Activated CD4-positive, alpha-beta T cell treated with anti-CD3 and anti-CD28 coated beads, Interleukin-2, amount 10 ng/mL, durations not matched to agents 24 days and 14 days (primary cell): ENCODE measurements at regions of chr5 and their contacts with region 1.

Region 1: DNA sequence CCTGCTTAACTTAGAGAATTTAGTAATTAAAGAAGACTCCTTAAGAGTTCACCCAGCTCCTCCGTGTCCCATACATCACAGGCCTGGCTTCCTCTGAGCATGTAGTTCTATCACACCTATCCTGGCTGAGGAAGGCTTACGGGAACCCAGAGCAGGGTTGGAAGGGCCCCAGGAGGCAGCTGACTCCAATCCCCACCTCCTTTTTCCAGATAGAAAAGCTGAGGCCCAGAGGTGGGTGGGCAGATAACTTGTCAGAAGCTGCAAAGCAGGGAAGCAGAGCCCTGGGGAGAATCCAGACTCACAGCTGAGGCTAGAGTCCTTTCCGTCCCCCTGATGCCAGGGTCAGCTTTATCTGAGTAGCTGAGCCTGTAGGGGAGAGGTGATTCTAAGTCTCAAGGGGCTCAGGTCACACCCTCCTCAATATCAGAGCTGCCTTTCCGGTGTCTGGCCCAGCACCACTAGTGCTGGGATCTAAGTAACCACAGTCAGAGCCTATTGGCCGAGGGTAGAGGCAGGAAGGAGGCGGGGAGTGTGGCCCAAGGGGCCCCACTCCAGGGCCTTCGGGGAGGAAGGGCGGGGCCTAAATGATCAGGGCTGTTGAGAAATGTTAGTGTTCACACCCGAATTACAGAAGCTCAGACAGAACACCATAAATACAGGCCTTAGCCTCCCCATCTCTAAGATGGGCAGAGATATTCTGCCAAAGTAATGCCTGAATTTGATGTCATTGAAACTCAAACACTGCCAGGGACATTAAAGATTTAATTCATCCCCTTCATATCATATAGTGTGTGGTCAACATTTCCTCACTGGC is 9.9 kb downstream of the CCDC69 start:
- DNase-seq: peak; percentile 95
- H3K4me3 Mint-ChIP-seq: peak overlapping the region; percentile 91
- H3K27ac Mint-ChIP-seq: peak overlapping the region; percentile 95
- H3K4me1 Mint-ChIP-seq: peaks cover 72% of the 10 kb centered on the region
- H3K27me3 Mint-ChIP-seq: no peaks in the 10 kb centered on the region

Region 2: DNA sequence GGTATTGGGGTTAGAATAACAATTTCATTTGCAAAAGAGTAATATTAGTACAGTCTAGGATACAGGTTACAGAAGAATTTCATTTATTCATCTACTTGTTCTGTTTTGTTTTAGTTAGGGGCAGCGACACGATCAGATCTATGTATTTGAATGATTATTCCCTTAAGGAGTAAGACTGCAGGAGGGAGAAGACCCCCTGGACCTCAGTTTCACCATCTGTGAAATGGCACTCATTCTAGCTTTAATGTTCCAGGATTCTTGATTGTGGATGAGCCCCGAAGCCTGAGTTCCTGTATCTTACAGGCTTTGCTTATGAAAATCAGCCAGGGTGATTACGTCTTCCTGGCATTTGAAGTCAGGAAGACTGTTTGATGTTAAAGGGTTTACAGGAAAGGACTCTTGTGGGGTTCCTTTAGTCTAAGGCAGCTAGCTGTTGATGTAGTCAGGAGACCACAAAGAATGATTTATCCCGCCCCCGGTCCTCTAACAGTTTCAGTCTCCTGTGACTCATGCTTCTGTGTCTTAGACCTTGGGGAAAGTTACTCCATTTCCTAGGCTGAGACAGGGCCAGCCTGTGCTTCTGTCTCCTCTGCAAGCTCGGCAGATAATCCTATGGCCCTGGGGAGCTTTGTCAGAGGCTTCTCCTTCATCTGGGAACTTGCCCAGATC is 423.9 kb before region 1 on chr5:
- intact Hi-C with region 1: loop called (anchors 5 kb)
- DNase-seq: peak; percentile 89
- H3K4me3 Mint-ChIP-seq: peak overlapping the region; percentile 82
- H3K27ac Mint-ChIP-seq: peak overlapping the region; percentile 84
- H3K4me1 Mint-ChIP-seq: peaks cover 55% of the 10 kb centered on the region
- H3K27me3 Mint-ChIP-seq: no peaks in the 10 kb centered on the region

Region 3: GRCh38 chr5:151150471-151151262 is 63.3 kb before region 1 on chr5:
- intact Hi-C with region 1: loop called (anchors 2 kb)
- DNase-seq: peak; percentile 93
- H3K4me3 Mint-ChIP-seq: peak overlapping the region; percentile 66
- H3K27ac Mint-ChIP-seq: peak overlapping the region; percentile 88
- H3K4me1 Mint-ChIP-seq: peaks cover 81% of the 10 kb centered on the region
- H3K27me3 Mint-ChIP-seq: no peaks in the 10 kb centered on the region

Region 4: GRCh38 chr5:151202381-151203139 is 11.4 kb before region 1 on chr5:
- intact Hi-C with region 1: loop called (anchors 1 kb)
- DNase-seq: no peak
- H3K4me3 Mint-ChIP-seq: peak overlapping the region; percentile 50
- H3K27ac Mint-ChIP-seq: peak overlapping the region; percentile 80
- H3K4me1 Mint-ChIP-seq: peaks cover 32% of the 10 kb centered on the region
- H3K27me3 Mint-ChIP-seq: no peaks in the 10 kb centered on the region

Region 5: DNA sequence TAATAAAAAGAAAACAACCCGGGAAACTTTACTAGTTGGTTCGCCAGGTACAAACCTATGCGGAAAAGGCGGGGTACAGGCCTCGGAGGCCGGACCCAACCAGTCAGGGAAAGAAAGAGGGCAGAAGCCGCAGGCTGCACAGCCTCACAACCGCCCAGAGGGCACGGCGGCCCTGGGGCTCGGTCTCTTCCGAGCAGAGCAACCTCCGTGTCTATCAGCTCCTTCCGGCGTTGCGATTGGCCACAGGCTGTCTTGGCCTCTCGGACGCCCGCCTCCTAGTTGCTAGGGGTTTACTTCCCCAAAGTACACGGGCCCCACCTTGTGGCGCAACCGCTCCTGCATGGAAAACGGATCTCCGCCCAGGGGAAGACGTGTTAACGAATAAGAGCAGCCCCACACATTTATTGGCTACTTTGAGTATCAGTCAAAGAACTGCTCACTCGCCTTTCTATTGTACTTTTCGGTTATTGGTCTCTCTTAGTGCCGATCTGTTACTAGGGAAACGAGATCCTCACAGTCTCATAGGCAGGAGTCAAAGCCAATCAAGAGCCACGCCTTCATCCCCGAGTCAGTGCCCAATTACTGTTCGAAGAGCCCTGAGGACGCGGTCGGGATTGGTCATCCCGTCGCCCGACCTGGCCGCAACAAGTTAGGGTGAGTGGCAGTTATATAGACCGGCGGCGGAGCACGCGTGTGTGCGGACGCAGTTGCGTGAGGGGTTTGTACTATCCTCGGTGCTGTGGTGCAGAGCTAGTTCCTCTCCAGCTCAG is 557.4 kb after region 1 on chr5 and contains the start of gene G3BP1:
- intact Hi-C with region 1: loop called (anchors 2 kb)
- DNase-seq: peak; percentile 100
- H3K4me3 Mint-ChIP-seq: peak within 1 kb of the TSS; percentile 98
- H3K27ac Mint-ChIP-seq: peak within 1 kb of the TSS; percentile 92
- H3K4me1 Mint-ChIP-seq: peaks cover 30% of the 10 kb centered on the region
- H3K27me3 Mint-ChIP-seq: no peaks in the 10 kb centered on the region
- total RNA-seq, gene G3BP1: 362 and 367 TPM in 2 replicates